A549 (cell line): ENCODE measurements at regions of chr6 and their contacts with region 1.

Region 1: GRCh38 chr6:37717836-37718251 is 20.2 kb upstream of the MDGA1 start:
- DNase-seq: peak in 1 of 2 experiments; percentile 59
- ATAC-seq: peak; percentile 60 to 84; a peak in 4 of 6 replicates
- H3K4me3 ChIP-seq: no peak overlapping the region
- H3K27ac ChIP-seq: peak overlapping the region; percentile 62 to 81; a peak in 5 of 6 replicates
- H3K4me1 ChIP-seq: peaks cover 34% of the 10 kb centered on the region
- CTCF ChIP-seq: no peak
- EP300 ChIP-seq: no peak
- POLR2A ChIP-seq: no peak
- RAD21 ChIP-seq: no peak

Region 2: DNA sequence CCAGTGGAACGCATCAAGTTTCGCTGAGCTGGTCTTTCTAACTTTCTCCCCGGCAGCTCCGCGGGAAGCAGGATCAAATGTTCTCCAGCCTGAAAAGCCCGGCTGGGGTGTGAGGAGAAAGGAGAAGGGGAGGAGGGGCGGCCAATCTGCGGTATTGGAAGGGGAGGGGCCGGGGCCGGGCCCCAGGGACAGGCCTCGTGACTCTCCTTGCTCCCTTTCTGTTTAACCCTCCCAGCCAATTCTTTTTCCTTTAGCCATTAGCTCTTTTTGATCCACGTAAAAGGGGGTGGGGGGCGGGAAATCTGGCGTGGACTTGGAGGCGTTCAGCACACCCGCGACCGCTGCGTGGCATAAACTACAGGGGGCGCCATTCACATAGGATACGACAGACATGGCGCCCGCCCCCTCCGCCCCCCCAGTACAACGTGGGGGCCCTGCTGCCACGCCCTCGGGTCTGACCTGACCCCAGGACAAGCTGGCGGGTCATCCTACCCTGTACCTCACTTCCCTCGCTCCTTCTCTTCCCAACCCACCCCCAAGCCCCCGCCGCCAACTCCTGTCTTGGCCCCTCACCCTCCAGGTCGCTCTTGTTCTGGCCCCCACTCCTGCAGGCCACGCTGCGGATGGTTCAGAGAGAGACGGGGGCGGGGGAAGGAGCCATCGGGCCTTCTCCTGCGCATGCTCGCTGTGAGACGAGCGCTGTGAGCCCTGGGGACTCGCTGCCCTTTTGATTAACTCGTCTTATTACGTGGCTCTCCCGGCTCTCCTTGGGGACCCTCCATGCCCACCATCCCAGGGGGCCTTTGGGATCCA is 12.4 kb before region 1 on chr6:
- CTCF ChIA-PET with region 1: interaction called, 12 read pairs
- POLR2A ChIA-PET with region 1: interaction called, 4 read pairs
- DNase-seq: peak; percentile 55 to 77
- ATAC-seq: peak; percentile 73 to 84
- H3K4me3 ChIP-seq: peak overlapping the region; percentile 41
- H3K27ac ChIP-seq: peak overlapping the region; percentile 77 to 87
- H3K4me1 ChIP-seq: peaks cover 26% of the 10 kb centered on the region
- CTCF ChIP-seq: peak; percentile 54
- EP300 ChIP-seq: no peak
- POLR2A ChIP-seq: no peak; the same call in 1 of the 2 replicates
- RAD21 ChIP-seq: peak; percentile 58 to 69